Psoas muscle (tissue), 8 donors: ENCODE measurements at regions of chr6 and their contacts with region 1.

Region 1: GRCh38 chr6:122289762-122290539 is 109.5 kb upstream of the HSF2 start:
- DNase-seq: no peak
- ATAC-seq: no peak
- H3K4me3 ChIP-seq: no peak overlapping the region
- H3K27ac ChIP-seq: no peak overlapping the region
- H3K4me1 ChIP-seq: peaks cover 4% of the 10 kb centered on the region
- H3K27me3 ChIP-seq: no peaks in the 10 kb centered on the region
- CTCF ChIP-seq: peak; percentile 42

Region 2: DNA sequence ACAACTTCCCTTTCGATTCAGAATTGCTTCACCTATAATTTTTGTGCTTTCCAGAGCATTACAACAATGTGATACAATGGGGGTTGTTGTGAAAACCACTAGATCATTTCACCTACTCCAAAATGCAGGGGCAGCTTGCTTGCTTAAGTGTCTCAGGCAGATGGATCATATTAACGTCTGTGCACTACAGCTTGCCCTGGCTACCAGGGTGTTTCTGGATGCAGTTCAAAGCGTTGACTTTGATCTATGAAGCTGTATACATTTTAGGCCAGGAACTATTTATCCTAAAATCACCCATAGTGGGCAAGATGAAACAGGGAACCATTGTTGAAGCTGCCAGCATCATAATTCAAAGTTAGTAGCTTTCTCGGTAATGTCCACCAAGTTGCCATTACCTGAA is 230.0 kb before region 1 on chr6:
- intact Hi-C with region 1: loop called in 1 of 2 experiments (anchors 10 kb)
- DNase-seq: no peak
- ATAC-seq: no peak
- H3K4me3 ChIP-seq: no peak overlapping the region
- H3K27ac ChIP-seq: no peak overlapping the region
- H3K4me1 ChIP-seq: no peaks in the 10 kb centered on the region
- H3K27me3 ChIP-seq: no peaks in the 10 kb centered on the region
- CTCF ChIP-seq: no peak

Region 3: GRCh38 chr6:122154912-122155575 is 134.9 kb before region 1 on chr6:
- intact Hi-C with region 1: no loop called
- DNase-seq: no peak
- ATAC-seq: peak in 1 of 4 donors; percentile 42
- H3K4me3 ChIP-seq: no peak overlapping the region
- H3K27ac ChIP-seq: no peak overlapping the region
- H3K4me1 ChIP-seq: no peaks in the 10 kb centered on the region
- H3K27me3 ChIP-seq: no peaks in the 10 kb centered on the region
- CTCF ChIP-seq: no peak

Region 4: GRCh38 chr6:122238861-122239260 is 51.1 kb before region 1 on chr6:
- intact Hi-C with region 1: no loop called
- DNase-seq: no peak
- ATAC-seq: no peak
- H3K4me3 ChIP-seq: no peak overlapping the region
- H3K27ac ChIP-seq: no peak overlapping the region
- H3K4me1 ChIP-seq: no peaks in the 10 kb centered on the region
- H3K27me3 ChIP-seq: no peaks in the 10 kb centered on the region
- CTCF ChIP-seq: no peak